AG04450 (cell line): ENCODE measurements at regions of chr3 and their contacts with region 1.

Region 1: GRCh38 chr3:9352917-9353752 is 9.7 kb upstream of the THUMPD3 start:
- DNase-seq: no peak
- H3K4me3 ChIP-seq: no peak overlapping the region
- H3K27ac ChIP-seq: no peak overlapping the region
- H3K27me3 ChIP-seq: no peaks in the 10 kb centered on the region
- CTCF ChIP-seq: peak; percentile 96

Region 2: GRCh38 chr3:9340472-9340902 is 12.6 kb before region 1 on chr3:
- CTCF ChIA-PET with region 1: interaction called, 19 read pairs
- POLR2A ChIA-PET with region 1: interaction called, 5 read pairs
- DNase-seq: no peak
- H3K4me3 ChIP-seq: no peak overlapping the region
- H3K27ac ChIP-seq: peak overlapping the region; percentile 87
- H3K27me3 ChIP-seq: no peaks in the 10 kb centered on the region
- CTCF ChIP-seq: no peak

Region 3: GRCh38 chr3:9503283-9503682 is 150.1 kb after region 1 on chr3:
- CTCF ChIA-PET with region 1: interaction called, 25 read pairs
- POLR2A ChIA-PET with region 1: no interaction called
- DNase-seq: peak; percentile 20
- H3K4me3 ChIP-seq: no peak overlapping the region
- H3K27ac ChIP-seq: peak overlapping the region; percentile 31
- H3K27me3 ChIP-seq: peaks cover 6% of the 10 kb centered on the region
- CTCF ChIP-seq: peak; percentile 92

Region 4: GRCh38 chr3:9957214-9957613 is 604.1 kb after region 1 on chr3:
- CTCF ChIA-PET with region 1: no interaction called
- POLR2A ChIA-PET with region 1: no interaction called
- DNase-seq: no peak
- H3K4me3 ChIP-seq: no peak overlapping the region
- H3K27ac ChIP-seq: no peak overlapping the region
- H3K27me3 ChIP-seq: no peaks in the 10 kb centered on the region
- CTCF ChIP-seq: peak; percentile 18; the same call in 1 of the 2 replicates